Panc1 (cell line): ENCODE measurements at regions of chr19 and their contacts with region 1.

Region 1: GRCh38 chr19:7629347-7630054 is at the starts of genes PET100 and XAB2:
- DNase-seq: peak; percentile 92
- ATAC-seq: peak; percentile 98
- H3K4me3 ChIP-seq: peak within 1 kb of the TSS; percentile 100
- H3K27ac ChIP-seq: peak within 1 kb of the TSS; percentile 92
- H3K4me1 ChIP-seq: peaks cover 9% of the 10 kb centered on the region; the same call in 1 of the 2 replicates
- H3K27me3 ChIP-seq: no peaks in the 10 kb centered on the region
- CTCF ChIP-seq: no peak
- total RNA-seq, gene PET100: 109 TPM
- total RNA-seq, gene XAB2: 36.9 TPM

Region 2: GRCh38 chr19:7698583-7698982 is 69.1 kb after region 1 on chr19:
- CTCF ChIA-PET with region 1: interaction called, 10 read pairs
- POLR2A ChIA-PET with region 1: no interaction called
- in situ Hi-C with region 1: no loop called
- intact Hi-C with region 1: no loop called
- DNase-seq: no peak
- ATAC-seq: no peak
- H3K4me3 ChIP-seq: no peak overlapping the region
- H3K27ac ChIP-seq: no peak overlapping the region
- H3K4me1 ChIP-seq: no peaks in the 10 kb centered on the region
- H3K27me3 ChIP-seq: peaks cover 2% of the 10 kb centered on the region; the same call in 1 of the 2 replicates
- CTCF ChIP-seq: no peak